ENCODE measurements at regions of chr9 and their contacts with region 1.

Region 1: DNA sequence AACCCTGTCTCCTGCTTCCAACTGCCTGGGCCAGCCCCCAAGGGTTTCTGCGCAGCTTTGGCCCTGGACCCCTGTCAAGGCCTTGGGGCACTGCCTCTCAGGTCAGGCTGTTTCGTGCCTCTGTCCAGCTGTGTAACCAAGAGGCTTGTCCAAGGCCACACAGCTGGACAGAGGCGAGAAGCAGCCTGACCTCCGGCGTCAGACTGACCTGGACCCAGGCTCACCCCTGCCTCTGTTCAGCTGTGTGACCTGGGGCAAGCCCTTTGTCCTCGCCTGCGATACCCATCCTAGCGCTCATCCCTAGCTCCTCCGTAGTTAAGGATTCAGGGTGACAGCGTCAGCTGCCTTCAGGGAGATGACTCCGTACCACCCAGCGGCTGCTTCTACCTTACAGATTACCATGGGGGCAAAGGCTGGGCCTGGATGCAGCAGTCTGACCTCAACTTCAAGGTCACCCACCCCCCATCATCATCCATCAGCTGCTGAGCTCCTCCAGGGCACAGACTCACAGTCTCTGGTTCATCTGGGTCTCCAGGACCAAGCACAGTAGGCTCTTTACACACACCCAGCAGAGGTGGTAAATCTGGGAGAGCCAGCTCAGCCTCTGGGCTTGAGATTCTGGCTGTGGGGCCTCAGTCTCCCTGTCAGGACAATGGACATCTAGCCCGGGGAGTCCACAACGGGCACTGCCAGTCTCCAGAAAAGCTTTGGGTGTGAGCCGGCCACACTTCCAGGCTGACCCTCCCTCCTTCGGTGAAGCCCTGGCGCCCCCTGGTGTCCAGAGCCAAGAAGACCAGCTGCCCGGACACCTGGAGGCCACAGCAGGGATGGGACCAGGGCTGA is 7.9 kb downstream of the AK1 start:
- DNase-seq: peak; percentile 94
- CTCF ChIP-seq: peak; percentile 96

Region 2: GRCh38 chr9:127763918-127764384 is 105.6 kb before region 1 on chr9:
- CTCF ChIA-PET with region 1: interaction called, 16 read pairs
- POLR2A ChIA-PET with region 1: no interaction called
- DNase-seq: peak; percentile 45
- CTCF ChIP-seq: peak; percentile 62

Region 3: GRCh38 chr9:127785023-127785932 is 84.3 kb before region 1 on chr9:
- CTCF ChIA-PET with region 1: interaction called, 25 read pairs
- POLR2A ChIA-PET with region 1: no interaction called
- DNase-seq: peak; percentile 88
- CTCF ChIP-seq: peak; percentile 75

Region 4: DNA sequence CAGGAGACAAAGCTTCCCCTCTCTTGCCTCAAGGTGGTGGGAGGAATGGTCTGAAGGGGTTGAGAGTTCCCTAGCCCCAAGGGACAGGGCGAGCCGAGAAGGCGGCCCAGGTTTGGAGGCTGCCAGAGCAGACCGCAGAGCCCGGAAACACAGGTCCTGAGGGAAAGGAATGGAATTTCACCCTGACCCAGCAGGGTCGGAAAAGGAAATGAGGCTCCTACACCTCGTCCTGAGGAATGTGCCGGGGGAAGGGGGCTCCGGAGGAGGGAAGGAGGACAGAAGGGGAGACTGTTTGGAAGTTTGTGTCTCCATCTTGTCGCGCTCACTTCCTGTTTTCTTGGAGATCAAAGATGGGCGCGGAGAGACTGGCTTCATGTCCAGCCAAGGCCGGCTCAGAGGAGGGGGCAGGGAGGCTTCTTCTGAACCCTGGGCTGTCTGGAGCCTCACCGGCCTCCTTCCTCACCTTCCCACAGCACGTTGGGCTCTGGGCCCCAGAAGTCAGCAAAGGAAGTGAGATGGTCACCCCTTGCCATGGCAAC is 24.6 kb before region 1 on chr9:
- CTCF ChIA-PET with region 1: interaction called, 15 read pairs
- POLR2A ChIA-PET with region 1: no interaction called
- DNase-seq: no peak
- CTCF ChIP-seq: no peak

Region 5: GRCh38 chr9:127890053-127890452 is 20.5 kb after region 1 on chr9:
- CTCF ChIA-PET with region 1: interaction called, 20 read pairs
- POLR2A ChIA-PET with region 1: interaction called, 4 read pairs
- DNase-seq: no peak
- CTCF ChIP-seq: no peak

Region 6: DNA sequence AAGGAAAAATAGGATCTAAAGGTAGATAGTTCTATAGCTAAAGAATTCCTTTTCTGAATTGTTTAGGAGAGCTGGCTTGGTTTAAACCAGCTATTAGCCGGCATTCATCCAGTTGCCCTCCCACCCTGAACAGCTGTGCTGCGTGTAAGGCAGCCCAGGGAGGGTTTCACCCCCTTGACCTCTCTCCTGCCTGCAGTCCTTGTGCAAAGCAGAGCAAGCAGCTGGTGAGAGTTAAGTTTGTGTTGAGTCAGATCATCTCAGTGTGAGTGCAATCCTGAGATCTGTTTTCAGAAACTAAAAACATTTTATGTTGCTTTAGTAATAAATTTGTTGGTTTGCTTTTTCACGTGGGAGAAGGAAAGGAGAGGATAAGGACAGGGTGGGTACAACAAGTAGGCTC is 211.5 kb after region 1 on chr9:
- CTCF ChIA-PET with region 1: no interaction called
- POLR2A ChIA-PET with region 1: no interaction called
- DNase-seq: no peak
- CTCF ChIP-seq: no peak